ENCODE measurements at regions of chr3 and their contacts with region 1.

Region 1: DNA sequence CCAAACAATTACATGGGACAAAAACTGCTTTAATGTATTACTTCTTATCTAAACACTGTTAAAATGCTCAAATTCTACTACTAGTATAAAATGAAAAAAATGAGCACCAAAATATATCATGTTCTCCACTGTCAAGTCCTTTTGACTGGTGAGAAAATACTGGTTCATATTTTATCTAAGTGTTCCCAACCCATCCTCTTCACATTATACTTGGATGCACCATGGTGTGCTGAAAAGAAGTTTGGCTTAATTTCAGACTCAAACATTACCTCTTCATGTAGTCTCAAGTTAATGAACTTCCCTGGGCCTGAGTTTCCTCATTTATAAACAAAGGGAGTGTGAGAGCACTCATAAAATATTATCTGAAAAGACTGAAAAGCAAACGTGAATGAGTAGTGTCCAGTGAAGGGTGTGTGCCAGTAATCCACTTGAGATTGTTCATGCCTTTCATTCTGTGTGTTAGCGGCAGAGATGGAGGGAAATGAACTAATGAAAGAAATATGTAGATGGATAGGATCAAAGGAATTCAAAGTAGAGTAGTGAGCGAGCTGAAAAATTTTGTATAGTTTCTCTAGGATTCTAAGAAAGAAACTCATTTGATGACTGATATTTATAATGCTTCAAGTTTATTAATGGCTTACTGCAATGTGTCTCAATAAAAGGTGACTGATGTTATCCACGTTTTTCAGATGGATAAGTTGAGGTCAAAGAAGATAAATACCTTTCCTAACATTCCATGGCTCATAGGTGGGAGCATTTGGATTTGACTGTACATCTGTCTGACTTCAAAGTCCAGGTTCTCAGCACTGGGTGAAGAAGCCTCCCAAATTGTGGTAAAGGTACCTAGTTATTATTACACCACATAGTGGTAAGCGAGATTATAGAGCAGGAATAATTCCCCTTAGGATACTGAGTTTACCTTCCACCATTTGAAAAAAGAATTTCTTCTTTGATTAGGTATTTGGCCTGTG is 263.4 kb downstream of the NLGN1 start:
- DNase-seq: no peak

Region 2: GRCh38 chr3:173591401-173591800 is 69.5 kb before region 1 on chr3:
- intact Hi-C with region 1: no loop called
- DNase-seq: no peak

Region 3: GRCh38 chr3:173617490-173617889 is 43.4 kb before region 1 on chr3:
- intact Hi-C with region 1: loop called (anchors 2 kb)
- DNase-seq: peak; percentile 80